Natural killer cell (primary cell): ENCODE measurements at regions of chr2 and their contacts with region 1.

Region 1: GRCh38 chr2:41698678-41699422 is 349.0 kb upstream of the PKDCC start:
- DNase-seq: peak in 1 of 2 donors; percentile 29
- ATAC-seq: peak in 1 of 3 donors; percentile 45
- H3K4me3 ChIP-seq: no peak overlapping the region
- H3K4me3 Mint-ChIP-seq: no peak overlapping the region
- H3K27ac ChIP-seq: no peak overlapping the region
- H3K27ac Mint-ChIP-seq: no peak overlapping the region
- H3K4me1 ChIP-seq: no peaks in the 10 kb centered on the region
- H3K4me1 Mint-ChIP-seq: peaks cover 9 to 12% of the 10 kb centered on the region in 2 donors
- H3K27me3 ChIP-seq: no peaks in the 10 kb centered on the region
- H3K27me3 Mint-ChIP-seq: peaks cover 8 to 13% of the 10 kb centered on the region in 2 donors
- CTCF ChIP-seq: peak; percentile 57

Region 2: DNA sequence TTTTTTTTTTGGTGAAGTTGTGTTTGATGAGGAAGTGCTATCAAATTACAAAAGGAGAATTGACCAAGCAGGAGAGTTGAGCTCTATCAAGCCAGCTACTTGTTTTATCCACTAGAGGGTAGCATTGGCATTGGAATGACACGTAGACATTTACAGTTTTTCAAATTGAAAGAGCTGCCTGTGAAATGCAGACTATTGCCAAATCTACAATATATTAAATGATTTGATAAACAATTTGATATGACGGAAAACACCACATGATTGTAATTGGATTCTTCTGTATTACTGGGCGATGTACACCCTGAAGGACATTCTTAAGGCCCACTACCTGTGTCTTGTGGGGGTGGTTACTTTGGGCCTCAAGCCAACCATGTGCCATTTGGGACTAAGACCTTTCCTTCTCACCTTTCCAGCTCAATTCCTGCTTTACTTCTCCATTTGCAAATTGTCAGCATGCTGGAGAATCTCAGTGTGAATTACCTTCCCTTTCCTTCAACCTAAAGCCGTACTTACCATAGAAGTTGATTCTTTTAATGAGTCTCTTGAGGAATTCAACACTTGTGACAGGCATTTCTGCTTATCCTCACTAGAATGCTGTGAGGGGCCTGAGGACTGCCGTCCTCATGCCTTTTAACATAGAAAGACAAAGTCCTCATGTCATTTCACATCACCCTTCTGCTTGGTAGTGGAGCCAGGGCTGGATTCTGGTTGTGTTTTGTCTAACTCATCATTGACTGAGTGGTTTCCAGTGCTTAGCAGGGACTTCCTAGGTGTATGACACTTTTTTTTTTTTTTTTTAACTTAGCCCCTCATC is 1785.0 kb before region 1 on chr2:
- intact Hi-C with region 1: loop called (anchors 5 kb)
- DNase-seq: peak in 1 of 2 donors; percentile 57
- ATAC-seq: peak in 1 of 3 donors; percentile 48
- H3K4me3 ChIP-seq: no peak overlapping the region
- H3K4me3 Mint-ChIP-seq: no peak overlapping the region
- H3K27ac ChIP-seq: no peak overlapping the region
- H3K27ac Mint-ChIP-seq: no peak overlapping the region
- H3K4me1 ChIP-seq: no peaks in the 10 kb centered on the region
- H3K4me1 Mint-ChIP-seq: no peaks in the 10 kb centered on the region
- H3K27me3 ChIP-seq: no peaks in the 10 kb centered on the region
- H3K27me3 Mint-ChIP-seq: peaks cover 3 to 9% of the 10 kb centered on the region in 2 donors
- CTCF ChIP-seq: peak; percentile 62

Region 3: GRCh38 chr2:41207578-41207977 is 491.3 kb before region 1 on chr2:
- intact Hi-C with region 1: no loop called
- DNase-seq: no peak
- ATAC-seq: no peak
- H3K4me3 ChIP-seq: no peak overlapping the region
- H3K4me3 Mint-ChIP-seq: no peak overlapping the region
- H3K27ac ChIP-seq: no peak overlapping the region
- H3K27ac Mint-ChIP-seq: no peak overlapping the region
- H3K4me1 ChIP-seq: no peaks in the 10 kb centered on the region
- H3K4me1 Mint-ChIP-seq: no peaks in the 10 kb centered on the region
- H3K27me3 ChIP-seq: no peaks in the 10 kb centered on the region
- H3K27me3 Mint-ChIP-seq: no peaks in the 10 kb centered on the region
- CTCF ChIP-seq: no peak

Region 4: DNA sequence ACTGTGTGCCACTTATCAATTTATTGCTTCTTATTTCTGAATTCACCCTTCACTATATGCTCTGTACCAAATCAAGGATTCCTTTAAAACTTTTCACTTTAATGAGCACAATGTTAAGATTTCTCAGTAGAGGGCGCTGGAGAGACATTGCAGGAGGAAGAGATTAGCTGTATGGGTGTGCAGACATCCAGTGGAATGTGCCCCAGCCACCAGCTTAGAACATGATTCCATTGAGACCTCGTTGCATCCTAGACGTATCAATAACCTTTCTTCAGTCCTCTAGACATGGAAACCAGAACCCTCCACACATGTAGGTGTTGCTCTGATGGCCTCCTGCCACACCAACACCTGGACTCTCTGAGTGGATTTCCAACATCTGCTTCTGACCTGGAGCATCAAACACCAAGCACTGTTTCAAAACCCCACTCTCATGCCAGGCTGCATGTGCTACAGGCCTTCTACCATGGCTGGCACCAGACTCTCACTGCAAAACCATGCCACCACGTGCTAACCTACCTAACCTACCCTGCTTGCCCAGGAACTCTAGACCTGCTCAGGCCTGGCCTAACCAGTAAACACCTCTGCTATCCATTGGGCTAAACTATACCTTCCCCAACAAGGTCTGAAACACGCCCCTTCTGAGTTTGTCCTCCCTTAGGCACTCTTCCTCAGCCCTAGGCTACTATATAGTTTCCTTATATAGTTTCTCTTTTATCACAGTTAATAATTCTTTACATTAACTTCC is 284.2 kb before region 1 on chr2:
- intact Hi-C with region 1: loop called (anchors 2 kb)
- DNase-seq: peak; percentile 8 to 14
- ATAC-seq: peak; percentile 46 to 81 (median 54)
- H3K4me3 ChIP-seq: no peak overlapping the region
- H3K4me3 Mint-ChIP-seq: no peak overlapping the region
- H3K27ac ChIP-seq: no peak overlapping the region
- H3K27ac Mint-ChIP-seq: peak overlapping the region in 1 of 2 donors; percentile 44
- H3K4me1 ChIP-seq: no peaks in the 10 kb centered on the region
- H3K4me1 Mint-ChIP-seq: peaks cover 8 to 9% of the 10 kb centered on the region in 2 donors
- H3K27me3 ChIP-seq: no peaks in the 10 kb centered on the region
- H3K27me3 Mint-ChIP-seq: peaks cover 3 to 5% of the 10 kb centered on the region in 2 donors
- CTCF ChIP-seq: peak; percentile 75